ENCODE measurements at regions of chr18 and their contacts with region 1.

Region 1: GRCh38 chr18:27605107-27605834 is 420.2 kb upstream of the CHST9 start:
- DNase-seq: peak; percentile 39
- ATAC-seq: no peak
- H3K4me3 Mint-ChIP-seq: no peak overlapping the region
- H3K27ac Mint-ChIP-seq: no peak overlapping the region
- H3K4me1 Mint-ChIP-seq: no peaks in the 10 kb centered on the region
- H3K27me3 Mint-ChIP-seq: no peaks in the 10 kb centered on the region

Region 2: DNA sequence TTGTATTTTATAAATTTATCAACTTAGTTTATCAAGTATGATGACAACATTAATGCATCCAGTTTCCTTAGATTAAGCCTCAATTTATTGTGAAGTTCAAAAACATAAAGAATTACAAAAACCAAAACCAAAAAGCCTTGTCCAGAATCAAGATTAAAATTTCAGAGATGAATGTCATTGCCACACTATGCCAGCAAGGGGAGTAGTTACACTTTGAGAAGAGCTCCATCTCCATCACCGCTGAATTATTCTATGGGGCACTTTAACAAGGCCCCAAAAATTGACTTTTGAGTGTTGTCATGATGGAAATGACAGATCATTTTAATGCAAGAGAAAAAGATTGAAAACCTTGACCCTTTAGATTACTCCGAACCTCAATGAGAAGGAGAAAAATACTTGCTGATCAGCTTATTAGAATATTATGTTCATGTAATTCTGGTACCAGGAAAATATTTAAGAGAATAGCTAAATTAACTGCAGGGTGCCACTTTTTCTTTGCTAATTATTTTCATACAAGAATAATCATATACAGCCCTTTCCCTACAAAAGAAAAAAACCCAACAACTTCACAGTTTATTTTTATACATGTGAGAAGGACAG is 587.3 kb before region 1 on chr18:
- CTCF ChIA-PET with region 1: no interaction called
- POLR2A ChIA-PET with region 1: no interaction called
- intact Hi-C with region 1: loop called in 1 of 2 experiments (anchors 5 kb)
- DNase-seq: no peak
- ATAC-seq: no peak
- H3K4me3 Mint-ChIP-seq: no peak overlapping the region
- H3K27ac Mint-ChIP-seq: no peak overlapping the region
- H3K4me1 Mint-ChIP-seq: no peaks in the 10 kb centered on the region
- H3K27me3 Mint-ChIP-seq: no peaks in the 10 kb centered on the region

Region 3: DNA sequence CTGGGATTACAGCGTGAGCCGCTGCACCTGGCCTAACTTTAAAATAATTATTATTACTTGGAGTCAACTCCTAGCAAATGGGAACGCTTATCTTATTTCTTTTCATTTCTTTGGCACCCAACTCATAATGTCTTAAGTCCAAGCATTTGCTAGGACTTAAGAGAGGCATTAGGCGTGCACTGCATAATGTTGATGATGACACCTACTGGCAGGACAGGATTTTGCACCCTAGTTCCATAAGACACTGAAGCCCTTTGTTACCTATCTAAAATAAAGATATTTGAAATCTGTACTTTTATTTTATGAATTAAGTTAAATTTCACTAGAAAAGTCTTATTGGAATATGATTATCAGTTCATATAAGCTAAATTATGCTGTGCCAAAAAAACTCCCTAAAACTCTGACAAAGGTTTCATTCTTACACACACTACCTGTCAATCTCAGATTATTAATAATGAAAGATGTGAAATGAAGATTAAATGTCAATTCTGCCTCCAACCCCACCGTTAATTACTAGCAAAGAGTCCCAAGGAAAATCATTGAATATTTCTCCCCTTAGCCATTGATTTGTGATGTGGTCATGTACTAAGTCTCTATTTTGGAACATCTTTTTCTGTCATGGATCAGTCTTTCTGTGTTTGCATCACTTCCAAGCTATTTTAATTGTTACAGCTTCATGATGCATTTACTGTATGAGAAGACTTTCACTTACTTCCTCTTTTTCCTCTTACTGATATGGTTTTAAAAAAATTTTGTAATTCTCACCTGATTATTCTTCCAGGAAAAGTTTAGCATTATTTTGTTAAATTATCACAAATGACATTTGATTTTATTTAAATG is 584.3 kb after region 1 on chr18:
- CTCF ChIA-PET with region 1: no interaction called
- POLR2A ChIA-PET with region 1: no interaction called
- intact Hi-C with region 1: loop called (anchors 1 to 10 kb)
- DNase-seq: peak; percentile 46
- ATAC-seq: no peak
- H3K4me3 Mint-ChIP-seq: no peak overlapping the region
- H3K27ac Mint-ChIP-seq: no peak overlapping the region
- H3K4me1 Mint-ChIP-seq: peaks cover 2% of the 10 kb centered on the region
- H3K27me3 Mint-ChIP-seq: no peaks in the 10 kb centered on the region

Measured in activated CD4-positive, alpha-beta T cell treated with anti-CD3 and anti-CD28 coated beads for 36 hours (primary cell).